ENCODE measurements at regions of chr3 and their contacts with region 1.

Region 1: DNA sequence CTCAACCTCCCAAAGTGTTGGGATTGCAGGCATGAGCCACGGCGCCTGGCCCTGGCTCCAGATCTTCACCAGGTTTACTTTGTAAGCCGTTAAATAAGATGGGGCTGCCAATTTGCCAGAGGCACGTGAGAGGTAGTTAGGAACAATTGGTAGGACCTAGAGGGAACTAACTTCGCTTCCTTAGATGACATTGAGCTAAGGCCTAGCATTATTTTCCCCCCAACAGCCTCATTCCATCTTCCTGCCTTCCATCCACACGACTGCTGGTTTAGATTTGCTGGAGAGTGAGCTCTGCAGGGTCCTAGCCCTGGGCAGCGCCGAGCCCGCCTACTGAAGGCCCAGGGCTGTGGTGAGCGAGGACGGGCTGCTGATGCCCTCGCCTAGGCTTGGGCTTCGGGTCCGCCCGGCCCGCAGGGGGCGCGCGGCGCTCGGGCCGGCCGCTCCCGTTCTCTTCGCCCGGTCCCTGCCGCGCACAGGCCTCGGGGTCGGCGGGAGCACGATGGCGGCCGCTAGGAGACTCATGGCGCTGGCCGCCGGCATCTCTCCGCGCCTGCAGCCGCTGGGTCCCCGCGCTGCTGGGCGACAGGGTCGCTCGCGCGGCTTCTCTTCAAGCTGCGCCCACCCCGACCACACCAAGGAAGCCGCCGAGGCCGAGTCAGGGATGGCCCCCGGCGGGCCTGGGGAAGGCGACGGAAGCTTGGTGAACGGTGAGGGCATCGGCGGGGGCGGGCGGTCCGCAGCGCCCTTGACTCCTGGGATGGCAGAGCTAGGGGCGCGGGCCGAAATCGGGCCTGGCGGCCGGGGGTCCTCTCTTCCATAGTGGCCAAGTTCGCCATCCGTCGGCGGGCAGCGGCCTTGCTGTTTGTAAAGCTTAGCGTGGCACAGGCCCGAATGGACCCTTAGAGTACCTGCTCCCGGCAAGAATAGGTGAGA is 21.9 kb downstream of the DHX30 start:
- DNase-seq: peak; percentile 69 to 82 (median 78)
- H3K4me3 ChIP-seq: peak overlapping the region; percentile 88
- H3K4me3 Mint-ChIP-seq: peak overlapping the region; percentile 86 to 93 (median 89)
- H3K27ac ChIP-seq: peak overlapping the region; percentile 91
- H3K27ac Mint-ChIP-seq: peak overlapping the region; percentile 76 to 96 (median 88)
- H3K4me1 ChIP-seq: peaks cover 19% of the 10 kb centered on the region
- H3K4me1 Mint-ChIP-seq: peaks cover 27 to 34% (median 32%) of the 10 kb centered on the region in 3 donors
- H3K27me3 ChIP-seq: no peaks in the 10 kb centered on the region
- H3K27me3 Mint-ChIP-seq: no peaks in the 10 kb centered on the region

Region 2: DNA sequence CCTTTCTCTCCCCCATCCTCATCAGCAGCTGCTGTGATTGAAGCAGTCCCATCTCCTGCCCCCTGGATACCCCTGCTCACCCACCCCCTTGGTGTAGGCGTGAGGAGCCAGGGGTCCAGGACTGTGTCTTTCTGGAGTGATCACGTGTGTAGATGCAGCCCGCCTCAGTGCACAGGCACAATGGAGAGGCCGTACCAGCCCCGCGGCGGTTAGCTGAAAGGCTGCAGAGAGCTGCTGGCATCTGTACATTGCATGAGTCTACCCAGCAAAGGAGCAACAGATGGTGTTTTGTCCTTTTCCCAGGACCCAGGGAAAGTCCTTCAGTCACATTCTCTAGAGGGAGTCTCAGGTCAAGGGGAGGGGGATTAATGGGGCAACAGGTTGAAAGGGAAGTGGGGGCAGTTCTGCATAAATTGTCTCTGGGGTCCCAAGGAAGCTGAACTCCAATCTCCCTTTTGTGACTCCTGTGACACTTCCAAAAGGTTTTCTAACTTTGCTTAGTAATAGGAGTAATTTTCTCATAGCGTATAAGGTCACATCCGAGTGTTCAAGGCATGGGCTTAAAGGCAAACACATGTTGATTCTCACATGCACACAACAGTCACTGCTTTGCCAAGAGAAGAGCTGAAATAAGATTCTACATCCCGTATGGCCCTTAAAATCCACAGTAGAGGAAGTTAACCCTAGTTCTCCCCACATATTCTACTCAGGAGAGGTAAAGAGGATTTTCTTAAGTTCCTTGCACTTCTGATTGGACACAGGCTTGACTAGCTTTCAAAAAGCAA is 253.2 kb before region 1 on chr3:
- CTCF ChIA-PET with region 1: no interaction called
- POLR2A ChIA-PET with region 1: no interaction called
- DNase-seq: no peak
- H3K4me3 ChIP-seq: no peak overlapping the region
- H3K4me3 Mint-ChIP-seq: no peak overlapping the region
- H3K27ac ChIP-seq: no peak overlapping the region
- H3K27ac Mint-ChIP-seq: peak overlapping the region in 1 of 8 donors; percentile 24
- H3K4me1 ChIP-seq: no peaks in the 10 kb centered on the region
- H3K4me1 Mint-ChIP-seq: no peaks in the 10 kb centered on the region
- H3K27me3 ChIP-seq: no peaks in the 10 kb centered on the region
- H3K27me3 Mint-ChIP-seq: peaks cover 24 to 25% of the 10 kb centered on the region in 2 donors

Region 3: DNA sequence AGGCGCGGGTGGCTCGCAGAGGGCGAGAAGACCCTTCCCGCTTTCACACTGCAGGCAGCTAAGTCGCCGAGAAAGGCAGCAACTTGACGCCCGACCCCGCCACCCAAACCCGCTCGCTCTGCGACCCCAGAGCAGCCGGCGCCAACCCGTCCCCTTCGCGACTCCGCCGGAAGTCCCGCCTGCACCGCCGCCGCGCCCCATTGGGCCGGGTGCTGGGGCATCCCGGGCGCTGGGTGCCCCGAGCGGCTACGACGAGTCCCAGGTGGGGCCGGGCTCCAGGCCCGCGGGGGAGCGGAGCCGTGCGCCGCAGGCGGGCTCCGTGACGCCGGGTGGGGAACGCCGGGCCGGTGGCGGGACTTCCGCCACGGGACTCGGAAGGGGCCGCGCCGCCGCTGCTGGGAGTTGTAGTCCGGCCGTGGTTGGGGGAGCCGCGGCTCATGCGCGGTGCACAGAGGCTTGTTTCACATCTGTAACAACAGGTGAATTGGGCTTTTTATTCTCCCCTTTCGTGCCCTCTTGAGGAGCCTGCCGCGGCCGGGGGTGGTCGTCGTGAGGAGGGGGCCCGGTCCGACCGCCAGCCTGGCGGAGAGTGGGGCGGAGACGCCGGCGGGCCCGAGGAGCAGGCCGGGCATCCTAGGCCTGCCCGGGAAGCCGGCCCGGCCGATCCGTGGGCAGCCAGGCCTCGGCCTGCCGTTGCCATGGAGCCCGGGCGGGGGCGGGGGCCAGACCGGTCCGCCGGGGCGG is 21.9 kb before region 1 on chr3 and contains the start of gene DHX30:
- CTCF ChIA-PET with region 1: interaction called, 20 read pairs
- POLR2A ChIA-PET with region 1: no interaction called
- DNase-seq: peak; percentile 79 to 86 (median 81)
- H3K4me3 ChIP-seq: peak within 1 kb of the TSS; percentile 72
- H3K4me3 Mint-ChIP-seq: peak within 1 kb of the TSS; percentile 91 to 97 (median 94)
- H3K27ac ChIP-seq: peak within 1 kb of the TSS; percentile 76
- H3K27ac Mint-ChIP-seq: peak within 1 kb of the TSS; percentile 89 to 99 (median 96)
- H3K4me1 ChIP-seq: peaks cover 23% of the 10 kb centered on the region
- H3K4me1 Mint-ChIP-seq: peaks cover 16 to 26% (median 26%) of the 10 kb centered on the region in 3 donors
- H3K27me3 ChIP-seq: no peaks in the 10 kb centered on the region
- H3K27me3 Mint-ChIP-seq: no peaks in the 10 kb centered on the region
- total RNA-seq, gene DHX30: 117 TPM

Region 4: GRCh38 chr3:47813551-47814177 is 11.1 kb before region 1 on chr3:
- CTCF ChIA-PET with region 1: interaction called, 50 read pairs
- POLR2A ChIA-PET with region 1: interaction called, 4 read pairs
- DNase-seq: no peak
- H3K4me3 ChIP-seq: no peak overlapping the region
- H3K4me3 Mint-ChIP-seq: peak overlapping the region in 2 of 7 donors; percentile 5 to 61
- H3K27ac ChIP-seq: no peak overlapping the region
- H3K27ac Mint-ChIP-seq: peak overlapping the region in 3 of 8 donors; percentile 17 to 66 (median 63)
- H3K4me1 ChIP-seq: no peaks in the 10 kb centered on the region
- H3K4me1 Mint-ChIP-seq: peaks cover 4 to 13% (median 11%) of the 10 kb centered on the region in 3 donors
- H3K27me3 ChIP-seq: no peaks in the 10 kb centered on the region
- H3K27me3 Mint-ChIP-seq: no peaks in the 10 kb centered on the region

Region 5: DNA sequence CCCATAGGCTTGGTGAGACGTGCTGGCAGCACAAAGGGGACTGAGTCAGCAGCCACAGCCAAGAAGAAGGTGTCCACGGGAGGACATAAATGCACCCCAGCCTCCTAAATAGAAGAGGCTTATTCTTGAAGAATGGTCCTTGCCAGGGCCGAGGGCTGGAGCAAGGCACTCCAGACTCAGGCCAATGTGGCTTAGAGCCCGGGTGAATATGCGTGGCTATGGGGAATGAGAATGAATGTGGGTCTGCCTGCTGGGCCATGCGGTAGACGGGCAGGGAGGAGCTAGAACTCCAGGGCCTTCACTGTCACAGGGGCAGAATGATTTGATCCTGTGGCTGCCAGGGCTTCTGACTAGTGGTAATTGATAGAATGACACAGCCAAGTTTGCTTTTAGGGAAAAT is 12.2 kb after region 1 on chr3:
- CTCF ChIA-PET with region 1: interaction called, 31 read pairs
- POLR2A ChIA-PET with region 1: interaction called, 3 read pairs
- DNase-seq: no peak
- H3K4me3 ChIP-seq: no peak overlapping the region
- H3K4me3 Mint-ChIP-seq: no peak overlapping the region
- H3K27ac ChIP-seq: no peak overlapping the region
- H3K27ac Mint-ChIP-seq: peak overlapping the region in 2 of 8 donors; percentile 52 to 70
- H3K4me1 ChIP-seq: no peaks in the 10 kb centered on the region
- H3K4me1 Mint-ChIP-seq: peaks cover 0 to 5% (median 5%) of the 10 kb centered on the region in 3 donors
- H3K27me3 ChIP-seq: no peaks in the 10 kb centered on the region
- H3K27me3 Mint-ChIP-seq: no peaks in the 10 kb centered on the region

Region 6: DNA sequence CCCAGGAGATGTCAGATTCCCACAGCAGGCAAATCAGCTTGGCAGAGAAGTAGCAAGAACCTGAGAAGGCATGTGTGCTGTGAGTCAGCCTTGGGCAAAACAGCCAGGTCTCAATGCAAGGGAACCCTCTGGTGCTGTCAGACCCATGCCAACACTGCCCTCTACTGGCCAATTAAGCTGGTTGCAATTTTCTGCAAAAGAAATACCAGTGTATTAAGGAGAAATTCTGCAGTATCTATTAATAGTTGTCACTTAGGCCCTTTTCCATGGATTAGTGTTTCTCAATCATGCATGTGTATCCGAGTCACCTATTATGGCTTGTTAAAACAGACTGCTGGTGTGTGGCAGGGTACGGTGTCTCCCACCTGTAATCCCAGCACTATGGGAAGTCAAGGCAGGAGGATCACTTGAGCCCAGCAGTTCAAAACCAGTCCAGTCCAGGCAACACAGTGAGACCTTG is 165.2 kb after region 1 on chr3:
- CTCF ChIA-PET with region 1: interaction called, 21 read pairs
- POLR2A ChIA-PET with region 1: no interaction called
- DNase-seq: peak; percentile 46 to 80 (median 59)
- H3K4me3 ChIP-seq: no peak overlapping the region
- H3K4me3 Mint-ChIP-seq: no peak overlapping the region
- H3K27ac ChIP-seq: no peak overlapping the region
- H3K27ac Mint-ChIP-seq: peak overlapping the region in 1 of 8 donors; percentile 14
- H3K4me1 ChIP-seq: no peaks in the 10 kb centered on the region
- H3K4me1 Mint-ChIP-seq: peaks cover 3 to 9% (median 8%) of the 10 kb centered on the region in 3 donors
- H3K27me3 ChIP-seq: no peaks in the 10 kb centered on the region
- H3K27me3 Mint-ChIP-seq: no peaks in the 10 kb centered on the region

Measured in CD8-positive, alpha-beta memory T cell (primary cell).